B cell (primary cell): ENCODE measurements at regions of chr7 and their contacts with region 1.

Region 1: GRCh38 chr7:140003913-140004382 is 58.8 kb downstream of the PARP12 start:
- DNase-seq: peak; percentile 61
- ATAC-seq: peak; percentile 49
- H3K4me3 ChIP-seq: no peak overlapping the region
- H3K4me3 Mint-ChIP-seq: no peak overlapping the region
- H3K27ac ChIP-seq: no peak overlapping the region
- H3K27ac Mint-ChIP-seq: peak overlapping the region; percentile 46
- H3K4me1 ChIP-seq: peaks cover 0 to 2% of the 10 kb centered on the region in 2 donors
- H3K4me1 Mint-ChIP-seq: peaks cover 2% of the 10 kb centered on the region
- H3K27me3 ChIP-seq: no peaks in the 10 kb centered on the region
- H3K27me3 Mint-ChIP-seq: no peaks in the 10 kb centered on the region
- CTCF ChIP-seq: peak; percentile 75

Region 2: DNA sequence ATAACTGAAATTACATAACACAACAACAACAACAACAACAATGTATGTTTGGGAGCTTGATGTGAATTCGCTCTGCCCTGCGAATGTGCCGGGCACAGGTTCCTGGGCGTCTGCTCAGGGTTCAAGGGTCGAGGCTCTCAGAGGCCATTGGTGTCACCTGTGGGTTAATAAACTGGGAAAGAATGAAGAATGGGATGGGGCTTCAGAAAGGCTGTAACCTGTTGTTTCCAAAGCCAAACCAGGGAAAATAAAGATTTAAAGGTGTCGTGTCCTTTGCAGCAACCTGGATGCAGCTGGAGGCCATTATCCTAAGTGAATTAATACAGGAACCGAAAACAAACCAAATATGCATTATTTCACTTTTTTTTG is 503.2 kb before region 1 on chr7:
- CTCF ChIA-PET with region 1: interaction called, 5 read pairs
- POLR2A ChIA-PET with region 1: no interaction called
- intact Hi-C with region 1: loop called (anchors 1 kb)
- DNase-seq: no peak
- ATAC-seq: no peak
- H3K4me3 ChIP-seq: no peak overlapping the region
- H3K4me3 Mint-ChIP-seq: no peak overlapping the region
- H3K27ac ChIP-seq: no peak overlapping the region
- H3K27ac Mint-ChIP-seq: no peak overlapping the region
- H3K4me1 ChIP-seq: peaks cover under 1 to 13% of the 10 kb centered on the region in 2 donors
- H3K4me1 Mint-ChIP-seq: peaks cover 13% of the 10 kb centered on the region
- H3K27me3 ChIP-seq: peaks cover 0 to 3% (median 0%) of the 10 kb centered on the region in 4 experiments
- H3K27me3 Mint-ChIP-seq: peaks cover 9% of the 10 kb centered on the region
- CTCF ChIP-seq: no peak

Region 3: GRCh38 chr7:139620676-139621344 is 383.1 kb before region 1 on chr7:
- CTCF ChIA-PET with region 1: interaction called, 14 read pairs
- POLR2A ChIA-PET with region 1: no interaction called
- intact Hi-C with region 1: loop called (anchors 1 kb)
- DNase-seq: peak; percentile 36
- ATAC-seq: no peak
- H3K4me3 ChIP-seq: no peak overlapping the region
- H3K4me3 Mint-ChIP-seq: no peak overlapping the region
- H3K27ac ChIP-seq: no peak overlapping the region
- H3K27ac Mint-ChIP-seq: no peak overlapping the region
- H3K4me1 ChIP-seq: no peaks in the 10 kb centered on the region
- H3K4me1 Mint-ChIP-seq: peaks cover 4% of the 10 kb centered on the region
- H3K27me3 ChIP-seq: no peaks in the 10 kb centered on the region
- H3K27me3 Mint-ChIP-seq: no peaks in the 10 kb centered on the region
- CTCF ChIP-seq: peak; percentile 81

Region 4: GRCh38 chr7:139909379-139910050 is 94.4 kb before region 1 on chr7:
- CTCF ChIA-PET with region 1: no interaction called
- POLR2A ChIA-PET with region 1: no interaction called
- intact Hi-C with region 1: no loop called
- DNase-seq: no peak
- ATAC-seq: no peak
- H3K4me3 ChIP-seq: no peak overlapping the region
- H3K4me3 Mint-ChIP-seq: no peak overlapping the region
- H3K27ac ChIP-seq: no peak overlapping the region
- H3K27ac Mint-ChIP-seq: no peak overlapping the region
- H3K4me1 ChIP-seq: peaks cover 0 to 15% of the 10 kb centered on the region in 2 donors
- H3K4me1 Mint-ChIP-seq: peaks cover 24% of the 10 kb centered on the region
- H3K27me3 ChIP-seq: no peaks in the 10 kb centered on the region
- H3K27me3 Mint-ChIP-seq: no peaks in the 10 kb centered on the region
- CTCF ChIP-seq: no peak

Region 5: DNA sequence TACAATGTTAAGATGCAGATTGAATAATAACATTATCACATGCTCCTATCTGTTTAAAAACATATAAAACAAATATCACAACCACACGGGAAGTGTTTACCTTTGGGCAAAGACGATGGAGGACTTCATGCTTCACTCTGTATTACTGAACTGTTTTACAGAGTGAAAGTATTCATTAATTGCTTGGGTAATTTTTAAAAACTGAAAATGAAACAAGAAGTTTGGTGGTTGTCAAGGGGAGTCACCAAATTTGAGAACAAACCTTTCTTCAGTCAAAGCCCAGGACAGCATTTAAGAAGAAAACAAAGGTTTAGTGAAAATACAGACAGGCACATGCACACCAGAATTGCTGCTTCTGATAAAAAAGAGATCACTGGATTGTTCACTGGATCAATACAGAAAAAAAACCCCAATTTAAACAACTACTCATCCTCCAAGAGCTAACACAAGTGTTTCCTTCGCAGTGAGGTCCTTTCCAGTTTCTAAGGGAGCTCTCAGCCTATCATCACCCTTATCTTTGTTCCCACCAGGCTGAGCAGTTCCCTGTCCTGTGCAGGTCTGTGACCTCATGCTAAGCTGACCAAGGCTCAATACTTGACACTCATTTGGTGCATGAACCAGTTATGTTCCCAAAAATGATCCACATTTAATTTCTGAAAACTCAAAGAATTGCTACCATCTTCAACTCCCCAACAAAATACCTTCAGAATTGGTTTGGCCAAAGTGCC is 50.0 kb after region 1 on chr7:
- CTCF ChIA-PET with region 1: no interaction called
- POLR2A ChIA-PET with region 1: no interaction called
- intact Hi-C with region 1: no loop called
- DNase-seq: peak; percentile 56
- ATAC-seq: peak; percentile 83
- H3K4me3 ChIP-seq: peak overlapping the region in 2 of 5 experiments; percentile 9 to 15
- H3K4me3 Mint-ChIP-seq: peak overlapping the region; percentile 69
- H3K27ac ChIP-seq: peak overlapping the region; percentile 57 to 81
- H3K27ac Mint-ChIP-seq: peak overlapping the region; percentile 86
- H3K4me1 ChIP-seq: peaks cover 23 to 25% of the 10 kb centered on the region in 2 donors
- H3K4me1 Mint-ChIP-seq: peaks cover 62% of the 10 kb centered on the region
- H3K27me3 ChIP-seq: no peaks in the 10 kb centered on the region
- H3K27me3 Mint-ChIP-seq: no peaks in the 10 kb centered on the region
- CTCF ChIP-seq: no peak

Region 6: DNA sequence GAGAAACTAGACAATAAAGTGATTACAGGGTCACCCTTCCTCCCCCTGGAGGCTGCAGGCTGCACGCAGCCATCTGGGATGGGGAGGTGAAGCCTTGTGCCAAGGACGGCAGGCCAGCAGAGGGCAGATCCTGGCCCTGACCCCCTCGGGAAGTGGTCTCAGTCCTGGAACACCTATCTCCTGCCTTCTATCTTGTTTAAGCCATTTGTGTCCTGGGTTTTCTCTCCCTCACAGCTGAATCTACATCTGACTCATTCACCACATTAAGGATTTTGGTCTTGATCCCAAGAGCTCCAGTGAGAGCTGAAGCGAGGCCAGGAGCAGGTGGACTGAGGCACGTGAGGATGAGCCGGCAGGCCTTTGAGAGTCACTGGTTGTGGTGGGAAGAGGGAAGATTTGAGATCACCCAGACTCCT is 75.2 kb after region 1 on chr7:
- CTCF ChIA-PET with region 1: no interaction called
- POLR2A ChIA-PET with region 1: no interaction called
- intact Hi-C with region 1: no loop called
- DNase-seq: no peak
- ATAC-seq: no peak
- H3K4me3 ChIP-seq: no peak overlapping the region
- H3K4me3 Mint-ChIP-seq: no peak overlapping the region
- H3K27ac ChIP-seq: no peak overlapping the region
- H3K27ac Mint-ChIP-seq: no peak overlapping the region
- H3K4me1 ChIP-seq: peaks cover 0 to 6% of the 10 kb centered on the region in 2 donors
- H3K4me1 Mint-ChIP-seq: peaks cover 7% of the 10 kb centered on the region
- H3K27me3 ChIP-seq: no peaks in the 10 kb centered on the region
- H3K27me3 Mint-ChIP-seq: peaks cover 4% of the 10 kb centered on the region
- CTCF ChIP-seq: no peak

Region 7: DNA sequence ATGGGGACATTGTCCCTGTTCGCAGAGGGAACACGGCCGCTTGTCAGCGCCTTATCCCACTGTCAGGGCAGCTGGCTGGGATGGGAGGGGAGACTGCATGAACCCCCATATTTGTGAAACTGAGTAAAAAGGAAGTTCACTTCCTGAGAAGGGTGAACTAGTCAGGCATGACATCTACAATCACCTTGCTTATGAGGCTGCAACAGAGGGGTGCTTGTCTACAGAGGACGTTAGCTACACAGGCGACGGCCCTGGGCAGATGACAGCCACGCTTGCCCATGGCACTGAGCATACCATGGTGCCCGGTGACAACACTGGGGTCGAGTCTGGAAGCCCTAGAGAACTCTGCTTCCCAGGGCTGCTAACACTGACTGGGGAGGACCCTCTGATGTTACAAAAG is 218.9 kb after region 1 on chr7:
- CTCF ChIA-PET with region 1: no interaction called
- POLR2A ChIA-PET with region 1: no interaction called
- intact Hi-C with region 1: no loop called
- DNase-seq: peak; percentile 78
- ATAC-seq: peak; percentile 97
- H3K4me3 ChIP-seq: peak overlapping the region in 4 of 5 experiments; percentile 8 to 22 (median 17)
- H3K4me3 Mint-ChIP-seq: peak overlapping the region; percentile 81
- H3K27ac ChIP-seq: peak overlapping the region; percentile 62 to 64
- H3K27ac Mint-ChIP-seq: peak overlapping the region; percentile 94
- H3K4me1 ChIP-seq: peaks cover 50 to 65% of the 10 kb centered on the region in 2 donors
- H3K4me1 Mint-ChIP-seq: peaks cover 49% of the 10 kb centered on the region
- H3K27me3 ChIP-seq: no peaks in the 10 kb centered on the region
- H3K27me3 Mint-ChIP-seq: no peaks in the 10 kb centered on the region
- CTCF ChIP-seq: no peak